ENCODE measurements at regions of chr1 and their contacts with region 1.

Region 1: DNA sequence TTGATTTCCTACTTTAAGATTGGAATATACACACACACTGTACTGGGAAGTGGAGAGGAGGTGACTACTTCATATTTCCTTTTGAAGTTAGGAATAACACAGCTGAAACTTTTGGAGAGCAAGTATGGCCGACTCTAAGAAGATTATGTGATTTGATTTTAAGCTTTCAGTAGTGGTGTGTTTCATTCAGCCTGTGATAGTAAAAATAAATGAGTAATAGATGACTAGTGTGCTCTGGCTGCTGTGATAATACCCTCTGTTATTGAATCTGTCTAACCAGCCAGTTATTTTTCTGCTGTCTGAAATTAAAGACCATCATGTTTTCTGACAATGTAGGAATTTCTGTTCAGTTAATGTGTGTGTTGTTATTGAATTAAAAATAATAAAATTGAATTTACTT is 48.3 kb downstream of the CTTNBP2NL start:
- DNase-seq: no peak

Region 2: DNA sequence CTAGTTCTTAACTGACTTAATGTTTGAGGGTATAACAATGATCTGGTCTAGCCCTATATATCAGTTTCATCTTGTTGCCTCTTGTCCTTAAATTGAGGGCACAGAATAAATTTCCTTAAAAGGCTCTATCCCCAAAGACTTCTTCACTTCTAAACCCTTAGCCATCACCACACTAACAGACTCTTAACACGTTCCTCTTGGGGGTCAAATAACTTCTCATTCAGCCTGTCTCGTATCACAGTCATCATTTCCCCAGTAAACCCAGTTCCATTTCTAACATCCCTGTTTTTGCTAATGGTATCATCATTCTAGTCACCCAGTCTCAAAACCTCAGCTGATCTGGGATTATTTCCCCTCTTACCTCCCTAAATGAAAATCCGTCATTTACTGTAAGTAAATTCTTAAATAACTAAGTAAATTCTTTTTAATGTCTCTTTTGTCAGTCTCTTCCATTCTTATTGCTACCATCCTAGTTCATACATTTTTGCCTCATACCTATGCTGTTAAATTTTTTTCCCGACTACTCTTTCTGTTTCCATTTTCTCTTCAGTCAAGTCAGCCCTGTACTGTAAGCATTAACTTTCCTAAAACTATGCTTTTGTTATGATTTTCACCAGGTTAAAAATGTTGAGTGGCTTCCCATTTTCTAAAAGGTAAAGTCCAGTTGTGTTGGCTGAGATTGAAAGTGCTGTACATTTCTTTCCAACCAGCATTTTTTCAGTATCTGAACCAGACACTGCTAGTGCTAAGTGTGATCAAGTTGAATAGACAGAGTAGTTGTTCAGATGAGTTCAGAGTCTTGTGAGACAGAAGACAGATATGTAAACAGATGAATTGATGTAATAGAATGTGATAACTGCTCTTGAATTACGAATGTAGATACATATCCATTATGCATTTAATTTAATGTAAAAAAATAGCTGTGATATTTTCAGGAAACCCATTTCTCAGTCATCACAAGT is 41.3 kb before region 1 on chr1:
- intact Hi-C with region 1: loop called in 1 of 2 experiments (anchors 5 kb)
- DNase-seq: no peak

Region 3: GRCh38 chr1:112507921-112508277 is 63.6 kb after region 1 on chr1:
- intact Hi-C with region 1: loop called in 1 of 2 experiments (anchors 2 kb)
- DNase-seq: peak; percentile 72